Colonic mucosa (tissue), 4 donors: ENCODE measurements at regions of chr5 and their contacts with region 1.

Region 1: GRCh38 chr5:148730943-148731861 is 76.9 kb upstream of the HTR4 start:
- DNase-seq: peak; percentile 85
- H3K4me3 ChIP-seq: no peak overlapping the region
- H3K27ac ChIP-seq: no peak overlapping the region
- H3K4me1 ChIP-seq: no peaks in the 10 kb centered on the region
- H3K27me3 ChIP-seq: no peaks in the 10 kb centered on the region
- CTCF ChIP-seq: peak; percentile 83

Region 2: GRCh38 chr5:147949711-147950573 is 781.3 kb before region 1 on chr5:
- intact Hi-C with region 1: loop called (anchors 5 kb)
- DNase-seq: no peak
- H3K4me3 ChIP-seq: no peak overlapping the region
- H3K27ac ChIP-seq: no peak overlapping the region
- H3K4me1 ChIP-seq: no peaks in the 10 kb centered on the region
- H3K27me3 ChIP-seq: no peaks in the 10 kb centered on the region
- CTCF ChIP-seq: peak; percentile 67

Region 3: DNA sequence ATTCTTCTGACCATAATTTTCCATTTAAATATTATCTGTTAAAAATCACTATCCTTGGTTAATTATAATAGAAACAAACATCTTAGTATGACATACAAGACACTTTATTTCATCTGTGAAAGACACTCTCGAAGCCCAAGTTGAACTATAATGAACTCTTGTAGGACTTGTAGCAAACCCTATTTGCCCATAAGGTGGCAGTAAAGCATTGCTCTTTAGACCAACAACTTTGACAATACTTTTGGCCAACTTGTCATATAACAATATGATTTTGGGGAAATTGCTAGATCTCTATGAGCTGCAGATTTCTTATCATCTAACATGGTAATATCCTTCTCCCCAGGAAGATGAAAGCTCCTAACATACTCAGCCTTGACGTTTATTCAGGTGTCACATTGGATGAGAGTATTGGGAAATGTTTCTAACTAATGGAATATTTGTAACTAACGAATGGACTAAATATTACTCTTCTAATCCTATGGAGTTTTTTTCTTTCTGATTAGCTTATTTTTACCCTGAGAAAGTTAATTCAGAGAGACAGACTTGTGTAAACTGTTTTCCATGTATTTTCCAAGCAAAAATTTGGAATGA is 551.9 kb before region 1 on chr5:
- intact Hi-C with region 1: loop called (anchors 5 kb)
- DNase-seq: peak; percentile 18
- H3K4me3 ChIP-seq: no peak overlapping the region
- H3K27ac ChIP-seq: no peak overlapping the region
- H3K4me1 ChIP-seq: no peaks in the 10 kb centered on the region
- H3K27me3 ChIP-seq: no peaks in the 10 kb centered on the region
- CTCF ChIP-seq: peak; percentile 50

Region 4: DNA sequence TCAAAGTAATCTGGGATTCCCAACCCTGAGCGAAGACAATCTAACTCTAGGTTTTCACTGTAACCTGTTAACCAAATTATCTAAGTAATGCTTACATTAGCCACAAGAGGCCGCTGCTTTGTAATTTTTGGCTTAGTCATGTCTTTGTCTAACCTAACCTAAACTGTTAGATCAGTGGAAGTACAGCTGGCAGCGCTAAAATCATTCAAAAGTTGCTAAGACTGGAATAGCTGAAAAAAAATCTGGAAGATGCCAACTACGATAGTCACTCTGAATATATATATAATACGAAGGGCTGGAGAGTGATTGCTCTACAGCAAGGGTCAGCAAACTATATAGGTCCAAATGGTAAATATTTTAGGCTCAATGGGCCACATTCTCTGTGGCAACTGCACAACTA is 287.2 kb before region 1 on chr5:
- intact Hi-C with region 1: loop called (anchors 2 kb)
- DNase-seq: peak; percentile 74
- H3K4me3 ChIP-seq: no peak overlapping the region
- H3K27ac ChIP-seq: no peak overlapping the region
- H3K4me1 ChIP-seq: peaks cover 4% of the 10 kb centered on the region
- H3K27me3 ChIP-seq: no peaks in the 10 kb centered on the region
- CTCF ChIP-seq: peak; percentile 52

Region 5: GRCh38 chr5:149001154-149001553 is 270.0 kb after region 1 on chr5:
- intact Hi-C with region 1: loop called (anchors 2 kb)
- DNase-seq: no peak
- H3K4me3 ChIP-seq: no peak overlapping the region
- H3K27ac ChIP-seq: no peak overlapping the region
- H3K4me1 ChIP-seq: no peaks in the 10 kb centered on the region
- H3K27me3 ChIP-seq: no peaks in the 10 kb centered on the region
- CTCF ChIP-seq: no peak

Region 6: DNA sequence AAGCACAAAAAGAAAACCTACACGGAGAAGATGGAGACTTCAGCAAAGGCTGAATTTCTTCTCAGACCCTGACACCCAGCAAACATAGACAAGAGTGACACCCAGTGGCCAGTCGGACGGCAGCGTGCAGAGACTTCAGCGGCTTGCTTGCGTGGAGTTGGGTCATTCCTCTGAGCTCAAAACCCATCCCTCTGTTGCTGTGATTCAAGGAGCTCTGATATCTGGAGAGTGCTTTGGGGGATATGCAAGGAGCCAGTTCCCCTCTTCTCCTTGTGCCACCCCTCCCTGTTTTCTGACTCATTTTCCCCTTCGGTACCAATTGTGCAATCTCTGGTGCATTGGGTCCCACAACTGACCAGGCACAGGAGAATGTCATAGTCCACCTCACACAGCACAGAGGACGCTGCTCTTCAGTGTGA is 304.2 kb after region 1 on chr5:
- intact Hi-C with region 1: loop called (anchors 2 kb)
- DNase-seq: peak; percentile 72
- H3K4me3 ChIP-seq: no peak overlapping the region
- H3K27ac ChIP-seq: no peak overlapping the region
- H3K4me1 ChIP-seq: no peaks in the 10 kb centered on the region
- H3K27me3 ChIP-seq: no peaks in the 10 kb centered on the region
- CTCF ChIP-seq: peak; percentile 54